ENCODE measurements at regions of chr5 and their contacts with region 1.

Region 1: DNA sequence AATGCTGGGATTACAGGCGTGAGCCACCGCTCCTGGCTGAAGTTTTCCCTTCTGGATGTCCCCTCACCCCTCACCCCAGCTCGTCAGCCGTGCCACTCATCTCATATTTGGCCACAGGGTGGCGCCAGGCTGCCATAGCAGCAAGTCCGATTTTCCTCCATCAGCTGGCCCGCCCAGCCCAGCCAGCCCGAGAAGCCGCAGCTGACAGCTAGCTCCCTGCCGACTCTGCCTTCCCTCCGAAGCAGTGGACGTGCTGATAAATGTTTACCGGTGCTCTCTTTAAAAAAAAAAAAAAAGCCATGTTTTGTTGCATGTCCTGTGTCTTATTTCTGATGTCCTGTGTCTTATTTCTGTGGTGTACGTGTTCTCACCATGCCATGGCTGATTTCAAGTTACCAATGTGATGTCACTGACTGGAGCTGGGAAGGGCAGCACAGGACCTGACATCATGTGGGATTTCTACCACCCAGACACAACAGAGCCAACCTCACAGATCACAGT is 58.3 kb downstream of the PFDN1 start:
- DNase-seq: peak; percentile 94 to 96
- H3K4me3 ChIP-seq: peak overlapping the region in 1 of 4 donors; percentile 16
- H3K27ac ChIP-seq: peak overlapping the region; percentile 44 to 82 (median 79)
- H3K4me1 ChIP-seq: peaks cover 74 to 100% (median 92%) of the 10 kb centered on the region in 4 donors
- H3K27me3 ChIP-seq: no peaks in the 10 kb centered on the region
- CTCF ChIP-seq: peak in 6 of 7 experiments; percentile 67 to 91 (median 84)
- EP300 ChIP-seq: no peak
- POLR2A ChIP-seq: no peak

Region 2: DNA sequence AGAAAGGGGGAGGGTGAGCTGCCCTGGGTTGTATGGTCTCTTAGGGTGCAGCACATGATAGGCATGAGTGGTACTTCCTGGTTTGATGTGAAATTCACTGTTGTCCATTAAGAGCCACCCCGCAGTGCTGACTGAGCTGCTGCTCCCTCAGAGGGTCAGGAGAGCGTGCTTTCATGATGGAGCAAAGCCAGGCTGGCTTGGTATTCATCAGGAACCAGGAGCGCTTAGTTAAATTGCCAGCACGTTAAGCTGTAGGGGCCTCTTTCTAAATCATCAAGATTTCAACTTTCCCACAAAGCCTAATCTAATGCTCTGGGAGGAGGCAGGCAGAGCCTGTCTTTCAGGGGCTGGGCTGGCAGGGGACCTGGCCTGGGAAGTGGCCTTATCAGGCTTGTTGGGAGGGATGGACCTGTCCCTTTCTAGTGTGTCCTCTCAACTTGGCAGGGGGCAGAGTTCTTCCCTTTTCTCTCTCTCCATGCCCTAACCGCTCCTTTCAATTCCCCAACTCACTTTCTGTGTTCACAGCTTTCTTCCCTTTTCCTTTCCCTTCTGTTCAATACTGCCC is 61.7 kb before region 1 on chr5:
- intact Hi-C with region 1: loop called (anchors 10 kb)
- DNase-seq: peak in 1 of 2 donors; percentile 71
- H3K4me3 ChIP-seq: peak overlapping the region in 1 of 4 donors; percentile 25
- H3K27ac ChIP-seq: peak overlapping the region; percentile 64 to 100 (median 100)
- H3K4me1 ChIP-seq: peaks cover 55 to 88% (median 77%) of the 10 kb centered on the region in 4 donors
- H3K27me3 ChIP-seq: no peaks in the 10 kb centered on the region
- CTCF ChIP-seq: no peak
- EP300 ChIP-seq: no peak
- POLR2A ChIP-seq: no peak

Region 3: DNA sequence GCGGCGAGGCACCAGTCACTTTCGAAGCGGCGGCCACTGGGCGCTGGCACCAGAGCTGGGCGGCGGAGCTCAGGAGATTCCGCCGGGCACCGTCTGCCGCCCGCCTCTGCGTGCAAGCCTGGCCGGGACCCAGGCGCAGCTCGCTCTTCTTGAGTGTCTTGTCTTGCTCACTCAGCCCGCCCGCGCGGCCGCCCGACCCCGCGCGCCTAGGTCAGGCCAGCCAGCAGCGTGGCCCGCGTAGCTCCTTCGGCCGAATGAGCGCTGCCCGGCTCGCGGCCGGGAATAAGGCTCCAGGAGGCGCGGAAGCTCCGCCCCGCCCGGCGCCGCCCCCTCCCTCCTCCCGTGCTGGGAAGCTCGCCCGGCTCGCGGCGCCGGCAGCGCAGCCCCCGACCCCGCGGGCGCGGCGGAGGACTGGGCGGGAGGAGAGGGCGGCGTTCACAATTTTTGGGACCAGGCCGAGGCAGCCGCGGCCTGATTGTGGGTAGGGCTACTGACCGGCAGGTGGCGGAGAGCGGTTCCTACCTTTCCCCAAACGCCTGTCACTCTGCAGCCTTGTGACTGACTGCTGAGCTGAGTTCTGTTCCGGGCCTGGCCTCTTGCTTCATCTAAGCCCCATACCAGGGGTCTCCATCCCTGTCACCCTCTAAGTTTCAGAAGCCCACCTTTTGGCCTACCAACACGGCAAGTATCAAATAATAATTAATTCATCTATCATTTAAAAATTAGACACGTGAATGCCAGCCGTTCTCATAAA is 102.0 kb after region 1 on chr5 and contains the start of gene HBEGF:
- intact Hi-C with region 1: loop called (anchors 5 kb)
- DNase-seq: peak; percentile 93 to 94
- H3K4me3 ChIP-seq: peak within 1 kb of the TSS; percentile 74 to 91 (median 88)
- H3K27ac ChIP-seq: peak within 1 kb of the TSS; percentile 88 to 93 (median 90)
- H3K4me1 ChIP-seq: peaks cover 55 to 71% (median 68%) of the 10 kb centered on the region in 4 donors
- H3K27me3 ChIP-seq: no peaks in the 10 kb centered on the region
- CTCF ChIP-seq: peak in 5 of 7 experiments; percentile 43 to 65 (median 55)
- EP300 ChIP-seq: no peak
- POLR2A ChIP-seq: peak in 2 of 4 donors; percentile 39 to 83
- total RNA-seq, gene HBEGF: 1.2 to 39.8 (median 27.7) TPM

Region 4: GRCh38 chr5:140357726-140358093 is 113.1 kb after region 1 on chr5:
- intact Hi-C with region 1: loop called (anchors 5 kb)
- DNase-seq: peak; percentile 92 to 95
- H3K4me3 ChIP-seq: peak overlapping the region in 3 of 4 donors; percentile 4 to 22 (median 13)
- H3K27ac ChIP-seq: peak overlapping the region in 3 of 5 donors; percentile 26 to 70 (median 35)
- H3K4me1 ChIP-seq: peaks cover 7 to 34% (median 23%) of the 10 kb centered on the region in 4 donors
- H3K27me3 ChIP-seq: no peaks in the 10 kb centered on the region
- CTCF ChIP-seq: peak in 5 of 7 experiments; percentile 57 to 93 (median 91)
- EP300 ChIP-seq: no peak
- POLR2A ChIP-seq: no peak